Posterior vena cava (tissue), 2 donors: ENCODE measurements at regions of chr20 and their contacts with region 1.

Region 1: DNA sequence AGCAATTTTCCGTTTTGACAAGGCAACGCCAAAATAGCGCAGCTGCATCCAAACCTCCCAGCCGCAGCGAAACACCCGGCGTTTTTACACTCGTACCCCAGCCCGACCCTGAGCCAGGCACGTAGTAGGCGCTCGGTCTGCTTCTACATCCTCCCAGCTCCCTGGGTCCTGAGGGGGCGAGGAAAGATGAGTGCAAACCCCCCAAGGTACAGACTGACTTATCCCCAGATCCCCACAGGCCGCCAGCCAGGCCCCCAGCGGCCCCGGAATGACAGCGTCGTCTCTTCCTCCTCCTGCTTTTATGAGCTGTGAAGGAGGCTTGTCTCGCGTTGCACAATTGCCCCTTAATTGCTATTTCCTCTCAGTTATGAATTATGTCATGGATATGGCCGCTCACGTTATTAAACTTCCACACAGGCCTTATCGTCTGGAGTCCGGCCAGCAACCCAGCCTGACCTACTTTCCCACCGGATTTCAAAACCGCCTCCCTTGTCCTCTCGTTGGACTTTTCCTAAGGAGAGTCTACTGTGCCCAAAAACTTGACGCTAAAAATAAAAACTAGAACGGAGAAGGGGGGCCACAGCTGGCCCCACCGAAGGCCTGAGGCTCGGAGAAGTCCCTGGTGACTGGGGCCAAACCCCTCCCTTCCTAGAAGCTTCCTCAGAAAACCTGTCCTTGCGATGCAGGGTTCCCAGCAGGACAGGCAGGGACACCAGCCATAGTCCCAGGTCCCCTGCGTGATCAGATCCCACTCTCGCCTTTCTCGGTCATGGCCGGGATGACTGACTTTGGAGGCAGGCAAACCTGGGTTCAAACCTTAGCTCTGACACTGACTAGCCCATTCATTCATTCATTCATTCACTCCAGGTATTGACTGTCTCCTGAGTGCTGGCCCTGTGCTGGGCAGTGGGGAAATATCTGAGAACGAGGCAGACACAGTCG is 130.9 kb upstream of the PTPN1 start:
- DNase-seq: peak; percentile 96

Region 2: DNA sequence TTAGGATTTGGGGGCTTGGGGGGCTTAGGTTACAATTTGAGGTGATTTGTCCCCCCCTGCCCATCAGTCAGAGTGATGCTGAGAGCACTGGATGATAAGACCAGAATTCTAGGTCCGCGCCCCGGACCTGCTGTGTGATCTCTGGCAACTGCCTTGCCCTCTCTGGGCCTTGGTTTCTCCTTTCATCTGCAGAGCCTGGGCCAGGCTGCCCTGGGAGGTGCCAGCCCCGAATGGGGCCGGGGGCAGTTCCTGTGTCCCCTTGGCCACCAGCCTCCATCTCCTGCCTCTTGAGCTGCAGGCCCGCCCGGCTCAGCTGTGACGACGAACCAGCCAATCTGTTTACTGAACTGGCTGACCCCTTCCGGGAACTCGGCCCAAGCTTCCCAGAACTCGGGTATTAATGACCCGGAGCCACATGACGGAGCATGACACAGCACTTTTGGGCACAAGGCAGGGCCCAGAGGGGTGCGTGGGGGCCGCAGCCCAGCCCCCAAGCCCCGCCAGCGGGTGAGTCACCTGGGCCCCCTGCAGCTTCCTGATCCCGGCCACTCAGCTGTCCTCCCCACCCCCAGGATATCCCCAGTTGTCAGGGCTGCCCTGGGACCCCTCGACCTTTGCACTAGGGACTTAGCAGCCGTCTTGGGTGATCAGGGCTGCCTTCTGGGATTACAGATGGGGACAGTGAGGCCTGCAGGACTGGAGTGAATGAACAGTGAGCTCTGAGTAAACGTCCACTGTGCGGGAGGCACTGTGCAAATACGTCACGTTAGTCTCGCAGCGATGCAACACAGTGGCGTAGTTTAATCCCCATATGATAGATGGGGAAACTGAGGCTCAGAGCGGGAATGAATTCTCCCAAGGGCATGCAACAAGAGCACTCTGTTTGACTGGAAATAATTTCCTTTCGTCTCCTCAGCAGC is 86.7 kb before region 1 on chr20:
- intact Hi-C with region 1: loop called in 1 of 2 experiments (anchors 10 kb)
- DNase-seq: peak; percentile 99

Region 3: DNA sequence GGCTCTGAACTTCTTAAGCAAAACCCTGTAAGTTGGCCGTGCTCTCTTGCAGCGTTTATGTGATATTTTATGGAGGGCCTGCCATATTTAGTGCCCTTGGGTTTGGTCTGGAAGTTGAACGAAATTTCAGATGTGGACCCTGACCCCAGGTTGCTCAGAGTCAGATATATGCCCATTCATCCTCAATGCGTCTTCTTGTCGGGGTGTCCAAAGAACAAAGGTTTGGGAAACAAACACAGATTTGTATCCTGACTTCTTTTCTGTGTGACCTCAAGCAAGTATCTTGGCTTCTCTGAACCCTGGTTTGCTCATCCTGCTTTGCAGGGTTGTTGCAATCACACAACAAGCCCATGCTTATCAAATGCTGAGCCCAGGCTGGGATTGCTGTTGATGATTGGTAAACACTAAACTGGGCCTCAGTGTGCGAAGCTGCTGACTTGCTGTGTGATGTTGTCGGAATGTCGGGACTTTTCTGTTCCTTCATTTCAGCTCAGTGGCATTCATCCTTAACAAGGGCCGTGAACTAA is 27.4 kb after region 1 on chr20:
- intact Hi-C with region 1: loop called in 1 of 2 experiments (anchors 1 kb)
- DNase-seq: no peak

Region 4: GRCh38 chr20:50446351-50447101 is 67.2 kb after region 1 on chr20:
- intact Hi-C with region 1: no loop called
- DNase-seq: no peak